ENCODE measurements at regions of chr13 and their contacts with region 1.

Region 1: GRCh38 chr13:44470638-44471562 is 97.3 kb downstream of the SERP2 start:
- DNase-seq: no peak
- ATAC-seq: no peak
- H3K4me3 Mint-ChIP-seq: no peak overlapping the region
- H3K27ac Mint-ChIP-seq: no peak overlapping the region
- H3K4me1 Mint-ChIP-seq: no peaks in the 10 kb centered on the region
- H3K27me3 Mint-ChIP-seq: no peaks in the 10 kb centered on the region

Region 2: DNA sequence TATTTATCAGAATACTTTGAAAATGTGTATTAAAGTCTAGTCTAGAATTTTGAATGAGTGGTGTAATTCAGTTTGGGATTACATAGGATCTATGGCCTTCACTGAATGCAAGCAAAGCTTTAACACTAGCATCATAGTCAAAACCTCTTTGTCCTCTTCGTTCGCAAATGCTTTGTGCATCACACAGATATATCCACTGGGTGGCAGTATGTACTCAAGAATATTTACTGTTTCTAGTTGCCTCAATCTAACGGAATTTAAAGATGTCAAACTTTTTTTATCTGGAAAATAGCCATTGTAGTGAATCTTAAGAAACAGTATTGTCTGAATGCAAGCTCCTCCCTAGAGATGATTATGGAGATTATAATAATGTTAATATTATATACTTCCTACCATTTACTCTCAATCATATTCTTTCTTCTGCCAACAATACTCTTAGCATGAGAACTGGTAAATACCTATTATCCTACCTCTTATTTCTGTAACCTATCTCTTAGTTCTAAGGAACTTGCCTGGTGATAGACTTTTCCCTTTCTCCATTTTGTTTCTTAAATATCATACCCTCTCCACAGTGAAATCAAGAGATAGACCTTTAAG is 565.4 kb before region 1 on chr13:
- CTCF ChIA-PET with region 1: interaction called, 18 read pairs
- POLR2A ChIA-PET with region 1: no interaction called
- DNase-seq: peak; percentile 48
- ATAC-seq: peak; percentile 73
- H3K4me3 Mint-ChIP-seq: no peak overlapping the region
- H3K27ac Mint-ChIP-seq: no peak overlapping the region
- H3K4me1 Mint-ChIP-seq: no peaks in the 10 kb centered on the region
- H3K27me3 Mint-ChIP-seq: peaks cover 24% of the 10 kb centered on the region

Region 3: GRCh38 chr13:44364348-44365049 is 106.4 kb before region 1 on chr13:
- CTCF ChIA-PET with region 1: no interaction called
- POLR2A ChIA-PET with region 1: no interaction called
- DNase-seq: no peak
- ATAC-seq: no peak
- H3K4me3 Mint-ChIP-seq: no peak overlapping the region
- H3K27ac Mint-ChIP-seq: no peak overlapping the region
- H3K4me1 Mint-ChIP-seq: no peaks in the 10 kb centered on the region
- H3K27me3 Mint-ChIP-seq: peaks cover 10% of the 10 kb centered on the region